ENCODE measurements at regions of chr3 and their contacts with region 1.

Region 1: DNA sequence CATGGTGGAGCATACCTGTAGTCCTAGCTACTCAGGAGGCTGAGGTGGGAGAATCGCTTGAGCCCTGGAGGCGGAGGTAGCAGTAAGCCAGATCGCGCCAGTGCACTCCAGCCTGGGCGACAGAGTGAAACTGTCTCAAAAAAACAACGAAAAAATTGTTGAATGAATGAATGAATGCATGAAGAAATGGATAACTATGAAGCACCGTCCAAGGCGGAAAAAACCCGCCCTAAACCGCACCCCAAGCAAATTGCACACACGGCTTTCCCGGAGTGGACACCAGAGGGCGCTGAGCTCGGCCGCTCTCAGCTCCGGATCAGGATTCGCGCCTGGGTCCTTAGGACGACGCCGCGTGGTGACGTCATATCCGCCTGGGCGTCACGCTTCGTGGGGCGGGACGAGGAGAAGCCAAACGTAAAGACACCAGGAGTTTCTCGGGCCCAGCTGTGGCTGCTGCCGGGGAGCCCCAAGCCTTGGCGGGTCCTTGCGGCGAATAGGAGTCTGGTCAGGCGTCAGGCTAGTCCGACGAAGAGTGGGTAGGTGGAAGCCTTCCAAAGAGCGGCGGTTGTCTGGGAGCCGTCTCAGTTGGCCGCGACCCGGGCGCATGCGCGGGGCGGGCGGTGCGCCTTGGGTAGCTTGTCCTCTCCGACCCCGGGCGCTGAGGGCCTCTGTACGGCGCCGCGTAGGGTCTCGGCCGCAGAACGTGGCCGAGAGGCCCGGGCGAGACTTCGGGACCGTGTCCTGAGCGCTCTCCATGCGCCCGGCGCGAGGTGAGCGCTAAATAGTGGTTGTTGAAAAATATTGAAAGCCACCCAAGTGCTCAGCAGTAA is at the starts of genes HTD2 and RPP14:
- DNase-seq: peak; percentile 98 to 100 (median 99)
- H3K4me3 ChIP-seq: peak within 1 kb of the TSS; percentile 66 to 97 (median 92)
- H3K27ac ChIP-seq: peak within 1 kb of the TSS; percentile 98 to 99
- H3K4me1 ChIP-seq: peaks cover 3 to 22% (median 19%) of the 10 kb centered on the region in 4 experiments
- H3K27me3 ChIP-seq: peaks cover 0 to 4% (median 0%) of the 10 kb centered on the region in 5 experiments

Region 2: DNA sequence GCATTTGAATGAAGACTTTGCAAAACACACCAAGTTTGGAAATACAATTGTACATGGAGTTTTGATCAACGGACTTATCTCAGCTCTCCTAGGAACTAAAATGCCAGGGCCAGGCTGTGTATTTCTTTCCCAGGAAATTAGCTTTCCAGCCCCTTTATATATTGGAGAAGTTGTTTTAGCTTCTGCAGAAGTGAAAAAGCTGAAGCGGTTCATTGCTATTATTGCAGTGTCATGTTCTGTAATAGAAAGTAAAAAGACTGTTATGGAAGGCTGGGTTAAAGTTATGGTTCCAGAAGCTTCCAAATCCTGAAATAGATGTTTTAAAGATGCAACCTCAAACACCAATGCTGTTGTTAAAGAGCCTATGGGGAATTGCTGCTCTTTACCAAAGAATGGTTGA is 11.7 kb after region 1 on chr3:
- CTCF ChIA-PET with region 1: interaction called, 25 read pairs
- POLR2A ChIA-PET with region 1: interaction called, 3 read pairs
- DNase-seq: no peak
- H3K4me3 ChIP-seq: no peak overlapping the region
- H3K27ac ChIP-seq: no peak overlapping the region
- H3K4me1 ChIP-seq: no peaks in the 10 kb centered on the region
- H3K27me3 ChIP-seq: no peaks in the 10 kb centered on the region

Region 3: GRCh38 chr3:58491506-58492402 is 185.7 kb after region 1 on chr3 and contains the start of gene KCTD6:
- CTCF ChIA-PET with region 1: interaction called, 14 read pairs
- POLR2A ChIA-PET with region 1: no interaction called
- DNase-seq: peak; percentile 94 to 97 (median 97)
- H3K4me3 ChIP-seq: peak within 1 kb of the TSS; percentile 65 to 95 (median 83)
- H3K27ac ChIP-seq: peak within 1 kb of the TSS in 1 of 2 experiments; percentile 59
- H3K4me1 ChIP-seq: peaks cover 6 to 22% (median 14%) of the 10 kb centered on the region in 4 experiments
- H3K27me3 ChIP-seq: peaks cover 0 to 2% (median 0%) of the 10 kb centered on the region in 5 experiments

Measured in common myeloid progenitor, CD34-positive (primary cell).